Activated CD4-positive, alpha-beta memory T cell treated with anti-CD3 and anti-CD28 coated beads, Interleukin-2, amount 10 ng/mL, durations not matched to agents 7 days and 5 days (primary cell): ENCODE measurements at regions of chr3 and their contacts with region 1.

Region 1: GRCh38 chr3:56801662-56802377 is at the start of gene ARHGEF3:
- DNase-seq: peak; percentile 89
- H3K4me3 Mint-ChIP-seq: peak within 1 kb of the TSS; percentile 90
- H3K27ac Mint-ChIP-seq: peak within 1 kb of the TSS; percentile 76
- H3K4me1 Mint-ChIP-seq: peaks cover 48% of the 10 kb centered on the region
- H3K27me3 Mint-ChIP-seq: no peaks in the 10 kb centered on the region
- total RNA-seq, gene ARHGEF3: 71.3 TPM

Region 2: GRCh38 chr3:56522374-56522773 is 279.4 kb before region 1 on chr3:
- CTCF ChIA-PET with region 1: no interaction called
- POLR2A ChIA-PET with region 1: no interaction called
- DNase-seq: no peak
- H3K4me3 Mint-ChIP-seq: no peak overlapping the region
- H3K27ac Mint-ChIP-seq: no peak overlapping the region
- H3K4me1 Mint-ChIP-seq: no peaks in the 10 kb centered on the region
- H3K27me3 Mint-ChIP-seq: peaks cover 20% of the 10 kb centered on the region

Region 3: GRCh38 chr3:56693750-56694149 is 108.1 kb before region 1 on chr3:
- CTCF ChIA-PET with region 1: interaction called, 36 read pairs
- POLR2A ChIA-PET with region 1: interaction called, 13 read pairs
- DNase-seq: no peak
- H3K4me3 Mint-ChIP-seq: peak overlapping the region; percentile 11
- H3K27ac Mint-ChIP-seq: peak overlapping the region; percentile 75
- H3K4me1 Mint-ChIP-seq: peaks cover 43% of the 10 kb centered on the region
- H3K27me3 Mint-ChIP-seq: no peaks in the 10 kb centered on the region

Region 4: DNA sequence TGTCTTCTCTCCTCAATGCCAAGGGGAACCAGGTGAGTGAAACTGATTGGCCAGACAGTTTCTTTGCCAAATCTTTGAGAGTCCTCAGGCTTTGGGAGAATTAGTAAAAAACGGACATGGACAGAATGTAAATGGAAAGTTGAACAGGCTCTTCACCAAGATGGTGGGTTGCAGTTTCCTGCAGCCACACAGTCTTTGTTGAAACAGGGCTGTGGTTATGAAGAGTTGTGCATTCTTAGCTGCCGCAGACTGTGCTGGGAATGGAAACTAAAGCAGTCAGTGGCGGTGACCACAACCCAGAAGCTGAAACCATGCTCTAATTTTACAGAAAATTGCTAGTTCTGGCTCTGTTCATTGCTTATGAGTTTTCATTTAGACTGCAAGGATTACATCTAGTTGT is 76.6 kb before region 1 on chr3:
- CTCF ChIA-PET with region 1: interaction called, 48 read pairs
- POLR2A ChIA-PET with region 1: interaction called, 38 read pairs
- DNase-seq: peak; percentile 82
- H3K4me3 Mint-ChIP-seq: peak overlapping the region; percentile 49
- H3K27ac Mint-ChIP-seq: peak overlapping the region; percentile 83
- H3K4me1 Mint-ChIP-seq: peaks cover 34% of the 10 kb centered on the region
- H3K27me3 Mint-ChIP-seq: no peaks in the 10 kb centered on the region

Region 5: GRCh38 chr3:56753206-56753820 is 48.5 kb before region 1 on chr3:
- CTCF ChIA-PET with region 1: interaction called, 88 read pairs
- POLR2A ChIA-PET with region 1: interaction called, 95 read pairs
- DNase-seq: peak; percentile 55
- H3K4me3 Mint-ChIP-seq: peak overlapping the region; percentile 3
- H3K27ac Mint-ChIP-seq: peak overlapping the region; percentile 85
- H3K4me1 Mint-ChIP-seq: peaks cover 60% of the 10 kb centered on the region
- H3K27me3 Mint-ChIP-seq: no peaks in the 10 kb centered on the region

Region 6: GRCh38 chr3:56775838-56776555 is 25.8 kb before region 1 on chr3:
- CTCF ChIA-PET with region 1: interaction called, 118 read pairs
- POLR2A ChIA-PET with region 1: interaction called, 168 read pairs
- DNase-seq: no peak
- H3K4me3 Mint-ChIP-seq: no peak overlapping the region
- H3K27ac Mint-ChIP-seq: no peak overlapping the region
- H3K4me1 Mint-ChIP-seq: peaks cover 51% of the 10 kb centered on the region
- H3K27me3 Mint-ChIP-seq: no peaks in the 10 kb centered on the region

Region 7: GRCh38 chr3:56903231-56903782 is 101.5 kb after region 1 on chr3:
- CTCF ChIA-PET with region 1: no interaction called
- POLR2A ChIA-PET with region 1: no interaction called
- DNase-seq: no peak
- H3K4me3 Mint-ChIP-seq: no peak overlapping the region
- H3K27ac Mint-ChIP-seq: no peak overlapping the region
- H3K4me1 Mint-ChIP-seq: peaks cover 21% of the 10 kb centered on the region
- H3K27me3 Mint-ChIP-seq: no peaks in the 10 kb centered on the region

Region 8: GRCh38 chr3:56915966-56916586 is 114.3 kb after region 1 on chr3:
- CTCF ChIA-PET with region 1: interaction called, 58 read pairs
- POLR2A ChIA-PET with region 1: interaction called, 85 read pairs
- DNase-seq: peak; percentile 87
- H3K4me3 Mint-ChIP-seq: peak overlapping the region; percentile 97
- H3K27ac Mint-ChIP-seq: peak overlapping the region; percentile 100
- H3K4me1 Mint-ChIP-seq: peaks cover 62% of the 10 kb centered on the region
- H3K27me3 Mint-ChIP-seq: no peaks in the 10 kb centered on the region